Caco-2 (cell line): ENCODE measurements at regions of chr7 and their contacts with region 1.

Region 1: DNA sequence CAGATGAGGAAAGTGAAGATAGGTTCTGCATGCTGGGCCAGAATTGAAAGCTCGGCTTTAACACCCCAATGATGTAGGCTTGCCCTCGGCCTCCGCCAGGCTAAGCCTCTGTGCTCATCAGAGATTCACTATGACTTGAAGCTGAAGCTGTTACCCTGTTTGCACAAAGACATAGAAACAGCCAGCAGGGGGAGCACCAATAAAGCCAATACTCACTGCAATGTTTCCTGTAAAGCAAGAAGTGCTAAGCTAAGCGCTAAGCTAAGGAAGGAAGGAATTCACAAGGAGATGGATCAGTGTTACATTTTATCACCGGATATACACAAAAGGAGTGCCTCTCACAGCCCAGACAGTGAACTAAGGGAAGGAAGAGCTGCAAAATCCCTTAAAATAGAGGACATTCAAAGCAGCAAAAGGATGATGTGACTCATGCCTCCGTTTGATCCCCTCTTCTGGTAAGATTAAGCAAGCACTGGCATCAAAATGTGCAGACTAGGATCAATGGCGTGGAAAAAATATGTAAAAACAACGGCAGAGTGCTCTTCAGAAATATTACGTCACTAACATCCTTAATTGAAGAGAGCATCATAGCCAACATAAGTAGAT is 153.8 kb downstream of the COBL start:
- DNase-seq: peak; percentile 84 to 89
- H3K4me3 ChIP-seq: no peak overlapping the region
- H3K4me3 Mint-ChIP-seq: no peak overlapping the region
- H3K27ac Mint-ChIP-seq: no peak overlapping the region
- H3K4me1 ChIP-seq: peaks cover 4% of the 10 kb centered on the region
- H3K4me1 Mint-ChIP-seq: peaks cover 19% of the 10 kb centered on the region
- H3K27me3 ChIP-seq: no peaks in the 10 kb centered on the region
- H3K27me3 Mint-ChIP-seq: no peaks in the 10 kb centered on the region
- CTCF ChIP-seq: peak; percentile 86 to 91

Region 2: GRCh38 chr7:50431316-50431715 is 731.5 kb before region 1 on chr7:
- CTCF ChIA-PET with region 1: no interaction called
- POLR2A ChIA-PET with region 1: no interaction called
- intact Hi-C with region 1: no loop called
- DNase-seq: no peak
- H3K4me3 ChIP-seq: no peak overlapping the region
- H3K4me3 Mint-ChIP-seq: no peak overlapping the region
- H3K27ac Mint-ChIP-seq: no peak overlapping the region
- H3K4me1 ChIP-seq: peaks cover 28% of the 10 kb centered on the region
- H3K4me1 Mint-ChIP-seq: peaks cover 19% of the 10 kb centered on the region
- H3K27me3 ChIP-seq: no peaks in the 10 kb centered on the region
- H3K27me3 Mint-ChIP-seq: no peaks in the 10 kb centered on the region
- CTCF ChIP-seq: no peak

Region 3: DNA sequence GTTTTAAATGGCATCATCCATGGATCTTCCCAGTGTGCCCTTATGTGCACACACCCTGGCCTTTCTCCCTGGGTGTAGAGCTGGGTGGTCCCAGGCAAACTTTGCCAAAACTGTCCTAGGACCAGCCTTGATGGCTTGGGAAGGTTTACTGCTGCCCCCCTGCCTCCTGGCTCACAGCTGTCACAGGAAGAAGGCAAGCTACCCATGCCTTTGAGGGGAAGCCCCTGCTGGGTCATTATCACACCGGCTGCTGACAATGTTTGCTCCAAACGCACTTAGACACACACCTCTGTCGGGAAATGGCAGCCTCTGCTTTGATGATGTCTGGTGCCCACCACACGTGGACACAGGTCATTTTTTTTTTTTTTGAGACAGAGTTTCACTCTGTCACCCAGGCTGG is 687.5 kb before region 1 on chr7:
- CTCF ChIA-PET with region 1: no interaction called
- POLR2A ChIA-PET with region 1: no interaction called
- intact Hi-C with region 1: loop called (anchors 10 kb)
- DNase-seq: no peak
- H3K4me3 ChIP-seq: no peak overlapping the region
- H3K4me3 Mint-ChIP-seq: no peak overlapping the region
- H3K27ac Mint-ChIP-seq: no peak overlapping the region
- H3K4me1 ChIP-seq: peaks cover 19% of the 10 kb centered on the region
- H3K4me1 Mint-ChIP-seq: peaks cover 24% of the 10 kb centered on the region
- H3K27me3 ChIP-seq: no peaks in the 10 kb centered on the region
- H3K27me3 Mint-ChIP-seq: no peaks in the 10 kb centered on the region
- CTCF ChIP-seq: no peak

Region 4: DNA sequence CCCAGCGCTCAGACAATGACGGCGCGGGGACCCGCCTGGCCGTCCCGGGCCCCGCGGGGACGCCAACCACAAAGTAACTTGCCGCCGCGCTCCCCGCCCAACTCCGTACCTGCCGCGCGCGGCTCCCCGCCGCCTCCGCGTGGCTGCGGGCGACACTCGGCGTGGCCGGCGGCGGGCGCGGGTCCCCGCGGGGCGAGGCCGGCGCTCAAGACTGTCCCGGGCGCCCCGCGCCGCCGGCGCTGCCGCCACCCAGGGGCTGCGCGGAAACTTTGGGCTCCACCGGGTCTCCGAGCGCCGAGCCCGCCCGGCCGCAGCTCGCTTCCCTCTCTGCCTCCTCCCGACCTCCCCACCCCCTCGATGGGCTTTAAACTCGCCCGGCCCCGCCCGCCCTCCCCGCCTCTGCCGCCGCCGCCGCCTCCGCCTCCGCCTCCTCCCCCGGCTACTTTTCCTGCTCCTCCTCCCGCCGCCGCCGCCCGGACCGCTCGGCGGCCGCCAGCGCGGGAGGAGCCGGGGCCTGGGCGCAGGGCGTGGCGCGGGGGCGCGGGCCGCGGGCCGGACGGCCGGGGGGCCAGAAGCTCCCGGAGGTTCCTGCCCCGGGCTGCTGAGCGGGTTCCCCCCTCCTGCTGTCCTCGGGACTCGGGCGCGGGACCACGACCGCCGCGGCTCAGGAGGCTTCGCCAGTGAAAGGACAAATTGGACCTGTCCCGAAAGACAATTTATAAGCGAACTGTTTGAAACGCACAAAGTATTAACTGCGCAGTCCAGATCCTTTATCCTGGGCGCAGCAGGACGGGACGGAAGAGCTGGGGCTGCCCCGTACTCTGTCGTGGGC is 369.5 kb before region 1 on chr7:
- CTCF ChIA-PET with region 1: interaction called, 3 read pairs
- POLR2A ChIA-PET with region 1: no interaction called
- intact Hi-C with region 1: loop called (anchors 5 kb)
- DNase-seq: peak; percentile 75 to 81
- H3K4me3 ChIP-seq: peak overlapping the region; percentile 47
- H3K4me3 Mint-ChIP-seq: peak overlapping the region; percentile 88
- H3K27ac Mint-ChIP-seq: no peak overlapping the region
- H3K4me1 ChIP-seq: peaks cover 5% of the 10 kb centered on the region; the same call in 1 of the 2 replicates
- H3K4me1 Mint-ChIP-seq: no peaks in the 10 kb centered on the region
- H3K27me3 ChIP-seq: no peaks in the 10 kb centered on the region
- H3K27me3 Mint-ChIP-seq: no peaks in the 10 kb centered on the region
- CTCF ChIP-seq: no peak

Region 5: DNA sequence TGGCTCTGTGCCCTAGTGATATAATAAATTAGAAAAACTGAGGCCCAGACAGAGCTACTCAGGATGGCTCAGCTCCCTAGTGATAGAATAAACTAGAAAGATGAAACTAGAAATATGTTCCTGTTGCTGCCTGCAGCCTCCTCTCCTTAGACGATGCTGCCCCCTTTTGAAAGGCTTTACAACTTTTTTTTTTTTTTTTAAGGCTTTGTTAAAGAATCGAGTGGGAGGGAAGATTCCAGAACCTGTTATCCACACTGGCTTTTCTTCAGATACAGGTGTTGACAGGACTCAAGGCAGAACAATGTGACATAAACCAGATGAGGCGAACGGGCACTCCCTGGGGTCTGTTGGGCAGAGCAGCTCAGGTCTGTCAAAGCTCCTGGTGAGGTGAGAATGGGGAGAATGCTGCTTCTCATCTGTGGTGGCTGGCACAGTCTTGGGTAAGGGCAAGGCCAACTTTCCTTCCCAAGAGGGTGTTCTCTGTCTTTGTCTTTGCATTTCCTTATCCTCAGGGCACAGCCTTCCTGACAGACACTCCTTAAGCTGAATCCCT is 21.3 kb before region 1 on chr7:
- CTCF ChIA-PET with region 1: interaction called, 11 read pairs
- POLR2A ChIA-PET with region 1: no interaction called
- intact Hi-C with region 1: no loop called
- DNase-seq: peak in 1 of 2 experiments; percentile 38
- H3K4me3 ChIP-seq: no peak overlapping the region
- H3K4me3 Mint-ChIP-seq: no peak overlapping the region
- H3K27ac Mint-ChIP-seq: no peak overlapping the region
- H3K4me1 ChIP-seq: no peaks in the 10 kb centered on the region
- H3K4me1 Mint-ChIP-seq: no peaks in the 10 kb centered on the region
- H3K27me3 ChIP-seq: no peaks in the 10 kb centered on the region
- H3K27me3 Mint-ChIP-seq: no peaks in the 10 kb centered on the region
- CTCF ChIP-seq: peak; percentile 37 to 44

Region 6: DNA sequence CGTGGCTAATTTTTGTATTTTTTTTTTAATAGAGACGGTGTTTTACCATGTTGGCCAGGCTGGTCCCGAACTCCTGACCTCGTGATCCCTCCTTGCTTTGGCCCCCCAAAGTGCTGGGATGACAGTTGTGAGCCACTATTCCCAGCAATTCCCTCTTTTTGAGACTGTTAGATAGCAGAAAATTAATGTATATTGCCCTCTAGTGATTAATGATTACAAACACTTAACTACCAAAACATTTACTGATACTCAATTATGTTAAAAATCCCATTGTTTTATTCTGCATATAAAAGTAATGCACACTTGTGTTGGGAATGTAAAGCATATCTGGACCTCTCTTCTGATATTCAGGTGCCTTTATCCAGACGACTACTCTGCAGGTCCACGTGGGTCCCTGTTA is 195.0 kb after region 1 on chr7:
- CTCF ChIA-PET with region 1: interaction called, 11 read pairs
- POLR2A ChIA-PET with region 1: no interaction called
- intact Hi-C with region 1: no loop called
- DNase-seq: no peak
- H3K4me3 ChIP-seq: no peak overlapping the region
- H3K4me3 Mint-ChIP-seq: no peak overlapping the region
- H3K27ac Mint-ChIP-seq: no peak overlapping the region
- H3K4me1 ChIP-seq: peaks cover 7% of the 10 kb centered on the region; the same call in 1 of the 2 replicates
- H3K4me1 Mint-ChIP-seq: peaks cover 5% of the 10 kb centered on the region
- H3K27me3 ChIP-seq: no peaks in the 10 kb centered on the region
- H3K27me3 Mint-ChIP-seq: no peaks in the 10 kb centered on the region
- CTCF ChIP-seq: no peak

Region 7: DNA sequence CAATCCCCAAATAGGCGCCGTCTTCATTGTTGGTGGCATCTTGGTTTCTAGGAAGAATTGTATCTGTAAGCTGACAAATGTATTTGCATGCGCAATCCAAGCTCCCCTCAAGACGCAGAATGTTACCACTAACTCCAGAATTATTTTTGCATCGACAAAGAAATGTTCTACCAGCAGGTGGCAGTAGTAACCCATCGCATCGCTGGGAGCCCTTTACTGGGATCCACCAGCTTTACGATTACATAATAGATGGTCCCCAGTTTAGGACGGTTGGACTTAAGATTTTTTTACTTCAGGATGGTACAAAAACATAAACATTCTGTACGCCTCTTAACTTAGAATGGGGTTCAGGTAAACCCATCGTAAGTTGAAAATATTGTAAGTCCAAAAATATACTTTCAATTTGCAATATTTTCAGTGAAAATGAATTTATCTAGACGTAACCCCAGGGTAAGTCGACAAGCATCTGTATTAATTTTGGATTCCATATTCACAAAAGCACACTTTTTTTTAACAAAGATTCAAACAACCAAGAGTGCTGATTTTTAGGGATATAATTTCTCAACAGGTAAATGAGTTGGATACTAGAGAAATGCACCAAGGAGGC is 267.8 kb after region 1 on chr7:
- CTCF ChIA-PET with region 1: interaction called, 21 read pairs
- POLR2A ChIA-PET with region 1: no interaction called
- intact Hi-C with region 1: loop called (anchors 1 kb)
- DNase-seq: peak; percentile 58 to 79
- H3K4me3 ChIP-seq: no peak overlapping the region
- H3K4me3 Mint-ChIP-seq: no peak overlapping the region
- H3K27ac Mint-ChIP-seq: no peak overlapping the region
- H3K4me1 ChIP-seq: no peaks in the 10 kb centered on the region
- H3K4me1 Mint-ChIP-seq: no peaks in the 10 kb centered on the region
- H3K27me3 ChIP-seq: no peaks in the 10 kb centered on the region; the same call in 1 of the 2 replicates
- H3K27me3 Mint-ChIP-seq: peaks cover 11% of the 10 kb centered on the region
- CTCF ChIP-seq: peak; percentile 82 to 90